Heart left ventricle (tissue), 16 donors: ENCODE measurements at regions of chr7 and their contacts with region 1.

Region 1: DNA sequence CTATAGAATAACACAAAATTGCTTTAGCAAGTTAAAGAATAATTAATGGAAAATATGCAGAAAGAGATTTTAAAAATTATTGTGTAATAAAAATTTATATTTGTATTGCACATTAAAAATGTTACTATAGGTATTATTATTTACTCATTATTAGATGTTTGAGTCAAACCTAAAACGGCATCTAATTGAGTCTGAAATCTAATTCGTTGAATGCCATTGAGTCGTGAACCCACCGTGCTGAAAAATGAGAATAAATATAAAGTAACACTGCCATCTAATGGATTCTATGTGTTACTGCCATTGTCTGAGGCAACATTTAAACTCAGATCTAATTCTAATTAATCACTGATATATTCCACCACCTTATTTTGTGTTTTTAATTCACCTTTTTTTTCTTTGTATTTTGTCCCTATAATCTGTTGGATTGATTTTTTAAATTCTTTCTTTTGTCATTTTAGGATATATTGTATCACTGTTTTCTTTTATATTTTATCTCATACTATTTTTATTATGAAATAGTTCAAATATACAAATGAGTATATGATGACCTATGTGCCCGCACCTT is 62.2 kb downstream of the SAMD9 start:
- DNase-seq: no peak
- ATAC-seq: peak in 1 of 4 donors; percentile 69
- H3K4me3 ChIP-seq: no peak overlapping the region
- H3K27ac ChIP-seq: no peak overlapping the region
- H3K4me1 ChIP-seq: peaks cover 0 to 12% (median 0%) of the 10 kb centered on the region in 12 donors
- H3K27me3 ChIP-seq: no peaks in the 10 kb centered on the region
- CTCF ChIP-seq: peak; percentile 71 to 87 (median 80)
- POLR2A ChIP-seq: no peak

Region 2: GRCh38 chr7:92528188-92528957 is 527.3 kb before region 1 on chr7 and contains the starts of genes PEX1 and RBM48:
- intact Hi-C with region 1: loop called in 2 of 10 experiments (anchors 10 kb)
- DNase-seq: peak; percentile 96 to 97 (median 96)
- ATAC-seq: peak; percentile 98 to 99 (median 99)
- H3K4me3 ChIP-seq: peak within 1 kb of the TSS; percentile 65 to 92 (median 84)
- H3K27ac ChIP-seq: peak within 1 kb of the TSS; percentile 45 to 92 (median 84)
- H3K4me1 ChIP-seq: peaks cover 0 to 41% (median 19%) of the 10 kb centered on the region in 12 donors
- H3K27me3 ChIP-seq: no peaks in the 10 kb centered on the region
- CTCF ChIP-seq: peak in 10 of 12 donors; percentile 28 to 76 (median 56)
- POLR2A ChIP-seq: peak in 1 of 2 donors; percentile 56
- total RNA-seq, gene PEX1: 10.7 to 19.9 (median 15.4) TPM
- total RNA-seq, gene RBM48: 6.5 to 13.7 (median 10.8) TPM

Region 3: GRCh38 chr7:92621026-92621540 is 434.5 kb before region 1 on chr7:
- intact Hi-C with region 1: loop called in 9 of 10 experiments (anchors 1 to 5 kb)
- DNase-seq: peak in 4 of 5 donors; percentile 59 to 77 (median 70)
- ATAC-seq: peak; percentile 68 to 92 (median 86)
- H3K4me3 ChIP-seq: no peak overlapping the region
- H3K27ac ChIP-seq: peak overlapping the region in 8 of 12 donors; percentile 1 to 70 (median 18)
- H3K4me1 ChIP-seq: peaks cover 0 to 31% (median 8%) of the 10 kb centered on the region in 12 donors
- H3K27me3 ChIP-seq: no peaks in the 10 kb centered on the region
- CTCF ChIP-seq: peak; percentile 64 to 85 (median 80)
- POLR2A ChIP-seq: no peak

Region 4: GRCh38 chr7:92691578-92691977 is 364.0 kb before region 1 on chr7:
- intact Hi-C with region 1: loop called in 5 of 10 experiments (anchors 5 to 10 kb)
- DNase-seq: no peak
- ATAC-seq: no peak
- H3K4me3 ChIP-seq: no peak overlapping the region
- H3K27ac ChIP-seq: no peak overlapping the region
- H3K4me1 ChIP-seq: peaks cover 0 to 30% (median 13%) of the 10 kb centered on the region in 12 donors
- H3K27me3 ChIP-seq: no peaks in the 10 kb centered on the region
- CTCF ChIP-seq: peak; percentile 24 to 65 (median 49)
- POLR2A ChIP-seq: no peak

Region 5: GRCh38 chr7:92843034-92843760 is 212.4 kb before region 1 on chr7:
- intact Hi-C with region 1: loop called in 7 of 10 experiments (anchors 5 to 10 kb)
- DNase-seq: no peak
- ATAC-seq: no peak
- H3K4me3 ChIP-seq: no peak overlapping the region
- H3K27ac ChIP-seq: no peak overlapping the region
- H3K4me1 ChIP-seq: no peaks in the 10 kb centered on the region
- H3K27me3 ChIP-seq: no peaks in the 10 kb centered on the region
- CTCF ChIP-seq: no peak
- POLR2A ChIP-seq: no peak